ENCODE measurements at regions of chr10 and their contacts with region 1.

Region 1: DNA sequence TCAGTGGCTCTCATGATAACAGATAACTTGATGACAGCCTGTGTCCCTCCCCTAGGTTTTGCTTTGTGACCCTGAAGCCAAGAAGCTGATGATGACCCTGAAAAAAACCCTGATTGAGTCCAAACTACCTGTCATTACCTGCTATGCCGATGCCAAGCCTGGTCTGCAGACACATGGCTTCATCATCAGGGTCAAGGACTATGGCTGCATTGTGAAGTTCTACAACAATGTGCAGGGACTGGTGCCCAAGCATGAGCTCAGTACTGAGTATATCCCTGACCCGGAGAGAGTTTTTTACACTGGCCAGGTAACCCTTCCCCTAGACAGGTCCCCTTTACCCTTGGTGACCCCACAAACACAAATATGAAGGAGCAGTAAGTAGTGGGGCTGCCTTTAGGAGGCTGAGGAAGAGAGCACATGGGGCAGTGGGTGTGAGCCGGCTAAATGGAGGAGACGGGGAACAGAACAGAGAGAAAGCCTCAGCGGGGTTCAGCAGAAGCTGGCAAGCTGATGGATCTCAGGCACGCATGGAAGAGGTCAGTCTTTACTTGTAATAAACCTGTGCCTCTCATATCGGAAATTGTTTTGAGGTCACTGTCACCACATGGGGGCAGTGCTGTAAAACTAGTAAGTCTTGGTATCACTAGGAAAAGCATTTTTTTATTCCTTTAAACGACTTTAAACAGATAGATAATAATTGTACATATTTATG is 20.2 kb downstream of the PDCD11 start:
- DNase-seq: no peak
- H3K4me3 ChIP-seq: no peak overlapping the region
- H3K27ac ChIP-seq: no peak overlapping the region
- H3K4me1 ChIP-seq: no peaks in the 10 kb centered on the region
- H3K27me3 ChIP-seq: no peaks in the 10 kb centered on the region
- CTCF ChIP-seq: peak in 2 of 3 experiments; percentile 27 to 44; a peak in 2 of 4 replicates
- EP300 ChIP-seq: no peak
- POLR2A ChIP-seq: no peak
- RAD21 ChIP-seq: peak; percentile 45 to 51

Region 2: GRCh38 chr10:103431902-103432301 is 15.3 kb after region 1 on chr10:
- CTCF ChIA-PET with region 1: interaction called, 17 read pairs
- POLR2A ChIA-PET with region 1: interaction called, 7 read pairs
- DNase-seq: no peak
- H3K4me3 ChIP-seq: no peak overlapping the region
- H3K27ac ChIP-seq: no peak overlapping the region
- H3K4me1 ChIP-seq: no peaks in the 10 kb centered on the region
- H3K27me3 ChIP-seq: no peaks in the 10 kb centered on the region
- CTCF ChIP-seq: no peak
- EP300 ChIP-seq: no peak
- POLR2A ChIP-seq: no peak
- RAD21 ChIP-seq: no peak